Activated naive CD8-positive, alpha-beta T cell treated with anti-CD3 and anti-CD28 coated beads, Interleukin-2, amount 10 ng/mL, durations not matched to agents 7 days and 5 days (primary cell): ENCODE measurements at regions of chr17 and their contacts with region 1.

Region 1: DNA sequence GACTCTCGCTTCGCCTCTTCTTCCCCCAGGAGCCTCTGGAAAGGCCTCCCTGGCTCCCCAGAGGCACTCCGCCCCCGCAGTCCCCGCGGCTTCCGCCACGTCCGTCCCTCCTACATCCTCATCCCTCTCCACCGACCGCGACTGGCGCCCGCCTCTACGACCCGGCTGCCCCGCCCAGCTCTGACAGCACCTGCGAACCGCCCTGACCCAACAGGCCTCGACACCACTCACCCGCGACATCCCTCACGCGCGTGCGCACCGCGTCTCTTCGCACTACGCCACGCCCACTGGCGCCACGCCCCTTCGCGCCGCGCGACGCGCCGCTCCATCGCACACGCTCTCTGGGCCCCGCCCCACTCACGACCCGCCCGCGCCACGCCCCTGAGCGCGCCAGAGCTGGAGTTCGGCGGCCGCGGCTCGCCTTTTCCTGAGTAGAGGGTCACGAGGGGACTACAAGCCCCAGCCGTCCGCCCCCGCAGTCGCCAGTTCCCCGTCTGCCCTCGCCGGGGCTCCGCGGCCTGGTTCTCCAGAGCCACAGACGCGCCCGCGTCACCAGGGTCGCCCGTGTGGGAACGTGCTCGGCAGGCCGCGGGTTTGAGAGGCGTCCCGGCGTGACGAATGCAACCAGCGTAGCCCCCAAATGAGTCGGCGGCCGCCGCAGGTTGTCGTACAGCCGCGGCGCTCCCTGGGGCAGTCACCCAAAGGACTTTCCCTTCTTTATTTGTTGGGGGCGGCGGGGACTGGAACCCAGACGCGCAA is 56.2 kb upstream of the LRRC37A3 start:
- DNase-seq: peak; percentile 100
- ATAC-seq: peak; percentile 89
- H3K4me3 Mint-ChIP-seq: peak overlapping the region; percentile 98
- H3K27ac Mint-ChIP-seq: peak overlapping the region; percentile 98
- H3K4me1 Mint-ChIP-seq: peaks cover 28% of the 10 kb centered on the region
- H3K27me3 Mint-ChIP-seq: no peaks in the 10 kb centered on the region

Region 2: GRCh38 chr17:65011966-65012365 is 36.5 kb after region 1 on chr17:
- POLR2A ChIA-PET with region 1: no interaction called
- DNase-seq: no peak
- ATAC-seq: no peak
- H3K4me3 Mint-ChIP-seq: no peak overlapping the region
- H3K27ac Mint-ChIP-seq: no peak overlapping the region
- H3K4me1 Mint-ChIP-seq: peaks cover 33% of the 10 kb centered on the region
- H3K27me3 Mint-ChIP-seq: no peaks in the 10 kb centered on the region

Region 3: GRCh38 chr17:65022751-65023700 is 47.5 kb after region 1 on chr17:
- POLR2A ChIA-PET with region 1: interaction called, 10 read pairs
- DNase-seq: no peak
- ATAC-seq: no peak
- H3K4me3 Mint-ChIP-seq: no peak overlapping the region
- H3K27ac Mint-ChIP-seq: no peak overlapping the region
- H3K4me1 Mint-ChIP-seq: peaks cover 36% of the 10 kb centered on the region
- H3K27me3 Mint-ChIP-seq: no peaks in the 10 kb centered on the region

Region 4: GRCh38 chr17:65055348-65056261 is 80.1 kb after region 1 on chr17:
- POLR2A ChIA-PET with region 1: interaction called, 18 read pairs
- DNase-seq: peak; percentile 67
- ATAC-seq: peak; percentile 41
- H3K4me3 Mint-ChIP-seq: peak overlapping the region; percentile 94
- H3K27ac Mint-ChIP-seq: peak overlapping the region; percentile 85
- H3K4me1 Mint-ChIP-seq: peaks cover 35% of the 10 kb centered on the region
- H3K27me3 Mint-ChIP-seq: peaks cover 10% of the 10 kb centered on the region

Region 5: DNA sequence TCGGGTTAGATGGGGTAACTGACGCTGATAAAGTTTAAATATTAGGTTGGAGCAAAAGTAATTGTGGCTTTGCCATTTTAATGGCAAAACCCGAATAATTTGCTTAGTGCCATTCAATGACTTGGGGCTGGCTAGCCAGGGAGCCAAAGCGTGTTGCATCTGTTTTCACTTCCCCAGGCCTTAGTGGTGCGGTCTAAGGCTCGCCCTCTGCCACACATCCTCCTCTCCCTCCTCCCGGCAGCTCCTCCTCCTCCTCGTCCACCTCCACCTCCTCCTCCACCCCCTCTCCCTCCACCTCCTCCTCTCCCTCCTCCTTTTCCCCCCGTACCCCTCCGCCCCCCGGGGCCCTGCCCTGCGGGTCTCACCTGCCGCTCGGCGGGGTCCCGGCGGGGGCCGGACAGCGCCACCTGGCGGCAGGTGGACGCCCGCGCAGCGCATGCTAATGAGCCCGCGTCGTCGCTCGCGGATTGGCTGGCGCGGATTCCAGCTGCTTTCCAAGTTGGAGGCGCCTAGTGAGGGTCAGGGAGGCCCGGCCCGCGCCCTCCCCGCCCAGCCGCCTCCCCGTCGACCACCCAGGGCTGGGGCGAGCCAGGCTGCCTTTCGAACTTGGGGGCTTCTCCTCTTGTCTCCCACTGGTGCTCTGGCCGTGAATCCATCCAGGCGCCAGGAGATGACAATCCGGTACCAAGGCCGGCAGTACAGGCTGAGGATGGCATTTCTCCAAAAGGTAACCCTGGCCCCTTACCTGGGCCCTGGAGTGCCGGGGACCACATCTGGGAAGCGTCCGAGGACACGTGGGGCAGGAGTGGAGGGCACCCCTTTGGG is 125.0 kb after region 1 on chr17:
- POLR2A ChIA-PET with region 1: interaction called, 16 read pairs
- DNase-seq: peak; percentile 92
- ATAC-seq: peak; percentile 91
- H3K4me3 Mint-ChIP-seq: peak overlapping the region; percentile 84
- H3K27ac Mint-ChIP-seq: peak overlapping the region; percentile 87
- H3K4me1 Mint-ChIP-seq: peaks cover 7% of the 10 kb centered on the region
- H3K27me3 Mint-ChIP-seq: peaks cover 8% of the 10 kb centered on the region